Posterior vena cava (tissue), 2 donors: ENCODE measurements at regions of chr18 and their contacts with region 1.

Region 1: GRCh38 chr18:10442551-10442971 is 11.9 kb upstream of the APCDD1 start:
- DNase-seq: no peak

Region 2: GRCh38 chr18:10368456-10369453 is 73.8 kb before region 1 on chr18:
- intact Hi-C with region 1: loop called in 1 of 2 experiments (anchors 10 kb)
- DNase-seq: no peak